ENCODE measurements at regions of chr1 and their contacts with region 1.

Region 1: GRCh38 chr1:27234049-27234882 is at the start of gene WDTC1:
- DNase-seq: peak; percentile 91 to 98 (median 97)
- ATAC-seq: peak; percentile 96
- H3K4me3 ChIP-seq: peak within 1 kb of the TSS; percentile 78
- H3K4me3 Mint-ChIP-seq: peak within 1 kb of the TSS; percentile 95 to 100 (median 98)
- H3K27ac ChIP-seq: peak within 1 kb of the TSS; percentile 78
- H3K27ac Mint-ChIP-seq: peak within 1 kb of the TSS; percentile 83 to 97 (median 96)
- H3K4me1 ChIP-seq: peaks cover 18 to 25% of the 10 kb centered on the region in 2 donors
- H3K4me1 Mint-ChIP-seq: peaks cover 25 to 39% (median 35%) of the 10 kb centered on the region in 7 donors
- H3K27me3 ChIP-seq: no peaks in the 10 kb centered on the region
- H3K27me3 Mint-ChIP-seq: peaks cover 0 to 3% (median 0%) of the 10 kb centered on the region in 5 donors
- total RNA-seq, gene WDTC1: 33.2 to 59.0 (median 46.3) TPM

Region 2: DNA sequence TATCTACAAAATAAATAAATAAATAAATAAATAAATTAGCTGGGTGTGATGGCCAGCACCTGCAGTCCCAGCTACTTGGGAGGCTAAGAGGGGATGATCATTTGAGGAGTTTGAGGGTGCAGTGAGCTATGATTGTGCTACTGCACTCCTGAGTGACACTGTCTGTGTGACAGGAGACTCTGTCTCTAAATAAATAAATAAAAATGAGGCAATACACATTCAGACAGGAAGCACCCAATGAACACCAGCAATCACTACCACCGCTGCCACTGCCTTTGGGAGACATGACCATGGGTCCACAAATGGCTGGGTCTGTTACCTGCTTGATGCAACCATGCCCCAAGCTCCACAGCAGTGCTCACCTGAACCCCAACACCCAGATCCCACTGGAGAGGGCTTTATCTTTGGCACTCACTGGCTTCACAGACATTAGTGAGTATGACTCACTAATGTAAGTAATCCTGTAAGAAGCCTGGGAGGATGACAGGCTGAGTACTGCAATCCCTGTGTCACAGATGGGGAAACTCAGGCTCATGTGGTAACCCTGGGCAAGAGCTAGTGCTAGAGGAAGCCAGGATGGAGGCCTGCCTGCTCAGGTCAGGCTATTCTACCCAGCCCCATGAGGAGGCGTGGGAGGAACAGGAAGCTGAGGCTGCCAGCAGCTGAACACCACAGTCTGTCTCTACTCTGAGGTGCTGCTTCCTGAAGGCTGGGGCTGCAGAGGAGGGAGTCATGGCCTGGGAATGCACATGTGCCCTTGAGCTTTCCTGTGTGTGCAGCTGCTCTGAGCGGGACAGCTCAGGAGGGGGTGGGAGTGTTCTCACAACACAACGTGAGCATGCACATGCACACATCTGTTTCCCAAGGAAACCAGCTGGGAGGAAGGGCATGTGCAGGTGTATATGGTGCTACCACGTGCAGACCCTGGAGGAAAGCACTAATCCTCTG is 122.4 kb before region 1 on chr1:
- CTCF ChIA-PET with region 1: interaction called, 6 read pairs
- POLR2A ChIA-PET with region 1: interaction called, 3 read pairs
- intact Hi-C with region 1: loop called in 1 of 2 experiments (anchors 1 kb)
- DNase-seq: peak; percentile 47 to 78 (median 71)
- ATAC-seq: peak; percentile 95
- H3K4me3 ChIP-seq: peak overlapping the region; percentile 9
- H3K4me3 Mint-ChIP-seq: peak overlapping the region; percentile 53 to 78 (median 71)
- H3K27ac ChIP-seq: peak overlapping the region; percentile 65
- H3K27ac Mint-ChIP-seq: peak overlapping the region; percentile 77 to 97 (median 87)
- H3K4me1 ChIP-seq: peaks cover 17 to 44% of the 10 kb centered on the region in 2 donors
- H3K4me1 Mint-ChIP-seq: peaks cover 42 to 75% (median 65%) of the 10 kb centered on the region in 7 donors
- H3K27me3 ChIP-seq: no peaks in the 10 kb centered on the region
- H3K27me3 Mint-ChIP-seq: no peaks in the 10 kb centered on the region

Region 3: DNA sequence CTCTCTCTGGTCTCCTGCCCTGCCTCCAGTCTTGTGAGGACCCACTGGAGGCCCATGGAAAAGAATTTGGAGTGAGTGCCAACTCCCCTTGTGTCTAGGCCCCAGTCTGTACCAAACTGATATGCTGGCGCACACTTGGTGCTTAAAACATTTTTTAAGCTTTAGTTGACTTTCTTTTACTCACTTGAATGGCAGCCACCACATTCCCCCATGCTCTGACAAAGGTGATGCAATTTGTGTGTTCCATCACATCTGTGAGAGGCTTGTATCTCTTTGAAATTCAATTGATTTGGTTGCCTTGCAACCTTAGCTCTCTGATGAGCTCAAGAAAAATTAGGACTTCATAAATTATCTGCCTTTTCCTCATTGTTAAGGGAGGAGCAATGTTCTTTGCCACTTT is 30.3 kb before region 1 on chr1:
- CTCF ChIA-PET with region 1: no interaction called
- POLR2A ChIA-PET with region 1: no interaction called
- intact Hi-C with region 1: no loop called
- DNase-seq: no peak
- ATAC-seq: no peak
- H3K4me3 ChIP-seq: no peak overlapping the region
- H3K4me3 Mint-ChIP-seq: no peak overlapping the region
- H3K27ac ChIP-seq: no peak overlapping the region
- H3K27ac Mint-ChIP-seq: no peak overlapping the region
- H3K4me1 ChIP-seq: no peaks in the 10 kb centered on the region
- H3K4me1 Mint-ChIP-seq: no peaks in the 10 kb centered on the region
- H3K27me3 ChIP-seq: no peaks in the 10 kb centered on the region
- H3K27me3 Mint-ChIP-seq: peaks cover 0 to 5% (median 0%) of the 10 kb centered on the region in 5 donors

Region 4: GRCh38 chr1:27258598-27258997 is 24.3 kb after region 1 on chr1:
- CTCF ChIA-PET with region 1: no interaction called
- POLR2A ChIA-PET with region 1: no interaction called
- intact Hi-C with region 1: loop called in 1 of 2 experiments (anchors 1 kb)
- DNase-seq: peak in 7 of 9 donors; percentile 26 to 62 (median 47)
- ATAC-seq: peak; percentile 60
- H3K4me3 ChIP-seq: no peak overlapping the region
- H3K4me3 Mint-ChIP-seq: peak overlapping the region in 9 of 10 donors; percentile 37 to 81 (median 67)
- H3K27ac ChIP-seq: no peak overlapping the region
- H3K27ac Mint-ChIP-seq: peak overlapping the region; percentile 6 to 96 (median 85)
- H3K4me1 ChIP-seq: peaks cover 0 to 30% of the 10 kb centered on the region in 2 donors
- H3K4me1 Mint-ChIP-seq: peaks cover 16 to 54% (median 37%) of the 10 kb centered on the region in 7 donors
- H3K27me3 ChIP-seq: no peaks in the 10 kb centered on the region
- H3K27me3 Mint-ChIP-seq: no peaks in the 10 kb centered on the region

Region 5: GRCh38 chr1:27489910-27490741 is 255.9 kb after region 1 on chr1 and contains the start of gene WASF2:
- CTCF ChIA-PET with region 1: no interaction called
- POLR2A ChIA-PET with region 1: no interaction called
- intact Hi-C with region 1: loop called (anchors 1 to 10 kb)
- DNase-seq: peak; percentile 91 to 99 (median 97)
- ATAC-seq: peak; percentile 98
- H3K4me3 ChIP-seq: peak within 1 kb of the TSS; percentile 100
- H3K4me3 Mint-ChIP-seq: peak within 1 kb of the TSS; percentile 89 to 99 (median 96)
- H3K27ac ChIP-seq: peak within 1 kb of the TSS; percentile 88
- H3K27ac Mint-ChIP-seq: peak within 1 kb of the TSS; percentile 97 to 100 (median 99)
- H3K4me1 ChIP-seq: peaks cover 14 to 19% of the 10 kb centered on the region in 2 donors
- H3K4me1 Mint-ChIP-seq: peaks cover 21 to 46% (median 42%) of the 10 kb centered on the region in 7 donors
- H3K27me3 ChIP-seq: no peaks in the 10 kb centered on the region
- H3K27me3 Mint-ChIP-seq: no peaks in the 10 kb centered on the region
- total RNA-seq, gene WASF2: 136 to 177 (median 145) TPM

Region 6: DNA sequence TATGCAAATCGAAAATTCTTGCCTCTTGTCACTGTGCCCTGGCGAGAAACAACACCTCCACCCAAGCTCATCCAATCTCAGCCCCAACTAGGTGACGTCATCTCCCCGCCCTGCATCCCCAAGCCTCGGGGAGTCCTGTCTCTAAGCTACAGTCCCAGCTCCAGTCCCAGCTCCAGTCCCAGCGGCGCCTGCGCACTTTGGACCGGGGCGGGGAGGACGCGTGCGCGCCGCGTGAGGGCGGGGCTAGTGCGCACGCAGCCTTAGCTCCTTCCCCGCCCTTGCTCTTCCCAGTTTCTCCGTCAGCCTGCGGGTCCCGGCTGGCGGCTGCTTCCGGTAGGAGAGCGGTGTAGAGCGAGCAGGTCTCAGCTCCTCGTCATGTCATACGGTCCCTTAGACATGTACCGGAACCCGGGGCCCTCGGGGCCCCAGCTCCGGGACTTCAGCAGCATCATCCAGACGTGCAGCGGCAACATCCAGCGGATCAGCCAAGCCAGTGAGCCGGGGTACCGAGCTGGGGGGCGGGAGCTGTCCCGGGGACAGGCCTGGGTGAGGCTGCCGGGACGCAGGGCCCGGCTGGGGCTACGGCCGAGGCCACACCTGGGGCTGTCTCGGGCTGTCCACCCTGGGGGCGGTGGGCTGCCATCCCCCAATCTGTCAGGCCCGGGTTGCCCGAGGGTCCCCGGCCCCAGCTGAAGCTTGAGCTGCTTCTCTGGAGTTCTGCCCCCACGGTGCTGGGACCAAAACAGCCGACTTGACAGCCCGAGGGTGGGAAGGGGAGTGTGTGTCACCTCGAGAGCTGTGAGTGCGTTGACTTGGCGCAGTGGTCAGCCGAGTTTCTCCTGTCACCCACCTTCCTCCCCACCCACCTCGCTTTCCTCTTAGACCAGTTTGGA is 538.9 kb after region 1 on chr1 and contains the start of gene STX12:
- CTCF ChIA-PET with region 1: no interaction called
- POLR2A ChIA-PET with region 1: no interaction called
- intact Hi-C with region 1: loop called in 1 of 2 experiments (anchors 10 kb)
- DNase-seq: peak; percentile 97 to 100 (median 98)
- ATAC-seq: peak; percentile 96
- H3K4me3 ChIP-seq: peak within 1 kb of the TSS; percentile 97
- H3K4me3 Mint-ChIP-seq: peak within 1 kb of the TSS; percentile 84 to 97 (median 94)
- H3K27ac ChIP-seq: peak within 1 kb of the TSS; percentile 94
- H3K27ac Mint-ChIP-seq: peak within 1 kb of the TSS; percentile 90 to 99 (median 96)
- H3K4me1 ChIP-seq: peaks cover 10 to 13% of the 10 kb centered on the region in 2 donors
- H3K4me1 Mint-ChIP-seq: peaks cover 26 to 43% (median 37%) of the 10 kb centered on the region in 7 donors
- H3K27me3 ChIP-seq: no peaks in the 10 kb centered on the region
- H3K27me3 Mint-ChIP-seq: no peaks in the 10 kb centered on the region
- total RNA-seq, gene STX12: 23.9 to 38.7 (median 28.9) TPM